PC-9 (cell line): ENCODE measurements at regions of chr7 and their contacts with region 1.

Region 1: GRCh38 chr7:143013893-143014292 is 13.0 kb downstream of the OR9A2 start:
- DNase-seq: no peak
- H3K4me3 ChIP-seq: no peak overlapping the region
- H3K27ac ChIP-seq: no peak overlapping the region
- H3K4me1 ChIP-seq: no peaks in the 10 kb centered on the region; the same call in 1 of the 2 replicates
- H3K27me3 ChIP-seq: no peaks in the 10 kb centered on the region
- CTCF ChIP-seq: no peak

Region 2: DNA sequence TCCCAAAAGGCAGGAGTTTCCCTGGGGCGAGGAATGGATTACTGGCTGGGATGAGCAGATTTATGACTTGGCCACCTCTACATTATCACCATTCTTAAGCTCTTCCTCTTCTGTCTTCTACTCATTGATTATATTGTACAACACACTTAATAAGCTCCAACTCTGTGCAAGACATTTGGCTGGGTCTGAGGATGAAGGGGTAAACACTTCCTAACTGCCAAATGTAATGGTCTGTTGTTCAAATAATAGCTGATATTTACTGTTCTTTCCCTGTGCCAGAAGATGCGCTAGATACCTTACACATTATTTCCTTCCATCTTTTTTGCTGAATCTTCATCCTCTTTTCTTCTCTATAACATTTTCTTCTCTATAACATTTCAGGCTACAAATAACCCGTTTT is 49.8 kb after region 1 on chr7:
- CTCF ChIA-PET with region 1: no interaction called
- POLR2A ChIA-PET with region 1: no interaction called
- intact Hi-C with region 1: loop called (anchors 2 kb)
- DNase-seq: no peak
- H3K4me3 ChIP-seq: no peak overlapping the region
- H3K27ac ChIP-seq: no peak overlapping the region
- H3K4me1 ChIP-seq: no peaks in the 10 kb centered on the region
- H3K27me3 ChIP-seq: no peaks in the 10 kb centered on the region
- CTCF ChIP-seq: no peak